Right ventricle myocardium inferior (tissue), 1 donor: ENCODE measurements at regions of chr3 and their contacts with region 1.

Region 1: DNA sequence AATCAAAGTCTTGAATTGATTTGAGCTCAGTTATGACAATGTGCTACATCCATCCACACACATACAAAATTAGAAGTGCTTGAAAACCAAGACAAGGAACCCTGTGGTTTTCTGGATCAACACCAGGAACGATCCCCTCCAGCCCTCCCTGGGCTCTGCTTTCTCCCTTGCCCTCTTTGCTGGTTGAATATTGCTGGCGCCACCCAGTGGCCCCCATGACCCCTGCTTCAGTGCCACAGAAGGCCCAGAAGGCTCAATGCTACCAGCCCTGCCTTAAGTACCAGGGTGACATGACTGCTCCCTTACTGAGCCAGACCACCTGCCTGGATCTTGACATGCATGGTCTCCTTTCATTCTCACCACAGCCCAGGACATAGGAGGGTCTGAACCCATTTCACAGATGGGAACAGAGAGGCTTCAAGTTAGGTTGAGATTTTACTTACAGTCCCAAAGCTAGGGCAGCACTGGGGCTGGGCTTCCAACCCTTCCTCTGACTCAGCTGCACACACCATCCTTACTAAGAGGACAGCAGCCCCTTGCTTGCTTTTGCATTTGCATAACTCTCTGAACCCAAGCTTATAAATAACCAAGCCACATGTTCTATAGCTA is 15.0 kb downstream of the IL12A start:
- DNase-seq: no peak
- ATAC-seq: peak; percentile 80

Region 2: GRCh38 chr3:159260049-159260662 is 743.5 kb before region 1 on chr3:
- intact Hi-C with region 1: loop called (anchors 2 kb)
- DNase-seq: no peak
- ATAC-seq: peak; percentile 59

Region 3: DNA sequence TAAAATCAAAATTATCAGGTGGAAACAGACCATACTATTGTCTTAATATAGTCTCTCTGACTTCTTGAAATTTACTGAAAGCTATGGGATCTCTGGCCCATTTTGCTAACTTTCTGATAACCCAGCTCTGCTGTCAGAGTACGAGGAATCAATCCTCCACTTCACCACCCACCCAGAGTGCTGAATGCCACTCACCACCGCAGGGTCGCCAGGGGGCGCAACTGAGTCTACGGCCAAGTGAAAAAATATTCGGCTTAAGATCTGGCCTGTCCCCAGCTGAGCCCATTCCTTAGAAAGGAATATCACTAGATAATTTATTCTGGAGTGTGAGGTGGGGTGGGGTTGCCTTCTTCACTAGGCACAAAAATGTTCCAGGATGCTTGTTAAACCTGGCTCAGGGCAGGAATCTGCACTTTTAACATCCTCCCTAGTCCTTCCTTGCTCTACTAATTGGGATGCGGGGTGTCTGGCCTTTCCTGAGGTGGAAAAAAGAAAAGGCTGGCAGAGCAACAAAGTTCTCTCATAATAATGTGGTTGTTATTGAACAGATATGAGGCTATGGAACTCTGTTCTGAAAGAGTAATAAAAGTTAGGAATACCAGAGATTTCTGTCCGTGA is 681.2 kb before region 1 on chr3:
- intact Hi-C with region 1: loop called (anchors 10 kb)
- DNase-seq: peak; percentile 67
- ATAC-seq: no peak

Region 4: GRCh38 chr3:159616212-159616825 is 387.3 kb before region 1 on chr3:
- intact Hi-C with region 1: loop called (anchors 10 kb)
- DNase-seq: no peak
- ATAC-seq: peak; percentile 60

Region 5: DNA sequence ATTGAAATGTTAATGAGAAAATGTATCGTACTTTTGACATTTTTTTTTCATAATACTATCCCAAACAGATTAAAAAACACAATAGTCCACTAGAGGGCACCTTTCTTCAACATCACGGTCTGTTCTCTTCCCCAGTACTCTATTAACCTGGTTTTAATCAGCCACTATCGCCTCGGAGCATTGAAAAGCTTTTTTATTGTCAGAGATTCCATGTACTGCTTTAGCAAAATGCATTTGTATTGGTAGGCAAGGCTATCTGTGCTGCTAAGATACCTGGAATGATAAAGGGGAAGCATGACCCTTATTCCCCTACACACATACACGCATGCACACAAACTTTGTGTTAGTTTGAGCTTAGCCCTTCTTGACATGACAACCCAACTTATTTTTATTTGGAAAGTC is 175.1 kb before region 1 on chr3:
- intact Hi-C with region 1: loop called (anchors 2 kb)
- DNase-seq: no peak
- ATAC-seq: peak; percentile 79

Region 6: DNA sequence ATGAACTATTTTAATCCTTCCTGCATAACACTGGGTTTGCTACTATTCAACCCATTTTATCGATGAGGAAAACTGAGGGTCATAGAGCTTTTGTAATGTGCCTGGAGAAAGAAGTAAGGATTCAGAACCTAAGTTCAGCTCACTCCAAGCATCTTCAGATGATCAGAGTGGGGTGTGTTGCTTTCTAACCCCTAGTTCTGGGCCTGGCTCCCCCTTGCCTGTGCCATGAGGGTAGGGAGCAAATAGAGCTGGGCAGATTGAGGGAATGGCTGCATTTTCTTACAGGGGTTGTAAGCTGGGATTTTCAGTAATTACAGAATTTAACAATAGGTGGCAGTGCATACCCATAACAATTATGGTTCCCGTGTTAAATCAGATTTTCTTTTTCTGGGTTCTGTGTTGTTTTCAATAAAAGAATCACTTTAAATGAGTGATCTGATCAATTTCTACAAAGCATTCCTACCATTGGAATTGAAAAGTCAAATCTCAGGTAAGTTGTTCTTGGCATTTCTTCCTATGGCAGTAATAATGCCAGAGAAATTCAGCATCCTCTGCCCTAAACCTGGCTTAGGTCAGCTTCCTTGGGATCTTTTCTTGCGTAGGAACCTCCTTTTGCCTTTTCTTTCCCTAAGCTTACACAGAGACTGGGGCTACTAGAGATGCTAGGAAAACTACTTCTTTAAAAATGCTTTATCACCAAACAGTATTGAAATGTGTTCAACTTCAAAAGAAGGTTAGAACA is 118.8 kb before region 1 on chr3:
- intact Hi-C with region 1: loop called (anchors 2 kb)
- DNase-seq: no peak
- ATAC-seq: no peak